ENCODE measurements at regions of chr12 and their contacts with region 1.

Region 1: DNA sequence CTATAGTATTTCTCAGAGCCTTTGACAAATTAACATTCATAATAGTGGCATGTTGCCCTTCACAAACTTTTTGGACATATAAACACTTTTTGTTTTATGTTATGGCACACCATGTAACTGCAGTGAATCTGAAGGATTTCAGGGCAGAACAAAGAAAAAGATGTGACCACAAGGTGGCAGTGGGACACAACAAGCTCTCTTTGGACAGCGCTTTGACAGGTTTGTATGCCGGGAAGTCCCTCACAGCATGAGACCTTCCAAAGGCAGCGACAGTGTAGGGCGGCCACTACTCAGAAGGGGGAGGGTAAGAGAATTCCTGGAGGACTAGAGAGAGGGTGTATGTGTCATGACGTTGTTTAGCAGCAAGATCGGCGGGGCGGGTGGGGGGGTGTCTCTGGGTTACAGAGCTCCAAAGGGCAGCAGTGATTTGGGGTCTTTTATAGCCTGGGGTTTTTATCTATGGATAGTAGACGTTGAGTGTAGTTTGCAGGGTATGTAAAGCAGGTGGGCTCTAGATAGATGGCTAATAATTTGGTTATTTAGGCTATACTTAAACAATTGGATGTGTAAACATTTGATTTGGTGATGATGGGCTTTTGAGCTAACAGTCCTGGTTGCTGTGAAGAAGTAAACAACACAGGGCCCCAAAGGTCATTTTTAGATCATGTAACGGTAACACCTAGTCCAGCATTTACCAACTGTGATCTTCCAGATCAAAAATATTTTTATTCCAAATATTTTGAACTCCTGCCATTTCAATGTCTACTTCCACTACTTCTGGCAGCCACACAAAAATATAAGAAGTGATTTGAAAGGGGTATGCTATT is 22.9 kb downstream of the ETFBKMT start:
- DNase-seq: peak; percentile 89
- ATAC-seq: peak; percentile 71
- H3K4me3 ChIP-seq: no peak overlapping the region
- H3K4me3 Mint-ChIP-seq: peak overlapping the region; percentile 69
- H3K27ac ChIP-seq: peak overlapping the region; percentile 50 to 73
- H3K27ac Mint-ChIP-seq: peak overlapping the region; percentile 93
- H3K4me1 ChIP-seq: peaks cover 19 to 30% of the 10 kb centered on the region in 2 donors
- H3K4me1 Mint-ChIP-seq: peaks cover 31% of the 10 kb centered on the region
- H3K27me3 ChIP-seq: no peaks in the 10 kb centered on the region
- H3K27me3 Mint-ChIP-seq: no peaks in the 10 kb centered on the region
- CTCF ChIP-seq: peak; percentile 88

Region 2: DNA sequence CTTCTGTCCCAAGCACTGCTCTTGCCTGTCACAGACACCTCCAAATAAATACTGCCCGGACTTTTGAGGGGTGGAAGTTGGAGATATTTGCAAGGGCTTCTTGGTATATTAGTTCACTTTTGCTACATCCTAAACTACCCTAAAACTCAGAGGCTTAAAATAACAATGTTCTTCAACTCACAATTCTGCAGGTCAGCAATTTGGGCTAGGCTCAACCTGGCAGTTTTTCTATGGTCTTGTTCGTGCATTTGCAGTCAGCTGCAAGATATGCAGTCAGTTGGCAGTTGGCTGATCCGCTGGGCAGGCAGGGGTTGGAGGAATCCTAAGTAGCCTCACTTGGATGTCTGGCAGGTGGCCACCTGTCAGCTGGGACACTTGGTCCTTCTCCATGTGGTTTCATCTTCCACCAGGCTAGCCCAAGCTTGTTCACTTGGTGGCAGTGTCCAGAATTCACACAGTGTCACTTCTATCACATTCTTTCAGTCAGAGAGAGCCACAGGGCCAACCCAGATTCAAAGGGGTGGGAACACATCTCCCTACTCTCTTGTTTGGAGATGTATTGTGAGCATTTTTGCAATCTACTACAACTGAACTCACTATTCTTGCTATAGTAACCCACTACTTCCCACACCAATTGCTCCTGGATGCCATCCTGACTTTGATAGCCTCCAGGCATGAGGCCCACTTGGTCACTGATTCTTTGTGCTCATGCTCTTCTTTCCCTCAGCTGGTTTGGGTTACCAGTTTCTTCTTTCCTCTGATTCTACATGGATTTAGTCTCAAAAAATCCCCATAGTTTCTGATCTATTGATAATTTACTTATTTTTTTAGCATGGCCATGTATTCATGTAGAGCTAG is 899.8 kb before region 1 on chr12:
- CTCF ChIA-PET with region 1: no interaction called
- POLR2A ChIA-PET with region 1: no interaction called
- intact Hi-C with region 1: no loop called
- DNase-seq: no peak
- ATAC-seq: no peak
- H3K4me3 ChIP-seq: no peak overlapping the region
- H3K4me3 Mint-ChIP-seq: no peak overlapping the region
- H3K27ac ChIP-seq: no peak overlapping the region
- H3K27ac Mint-ChIP-seq: no peak overlapping the region
- H3K4me1 ChIP-seq: no peaks in the 10 kb centered on the region
- H3K4me1 Mint-ChIP-seq: no peaks in the 10 kb centered on the region
- H3K27me3 ChIP-seq: peaks cover 0 to 4% (median 0%) of the 10 kb centered on the region in 4 experiments
- H3K27me3 Mint-ChIP-seq: peaks cover 46% of the 10 kb centered on the region
- CTCF ChIP-seq: no peak

Region 3: DNA sequence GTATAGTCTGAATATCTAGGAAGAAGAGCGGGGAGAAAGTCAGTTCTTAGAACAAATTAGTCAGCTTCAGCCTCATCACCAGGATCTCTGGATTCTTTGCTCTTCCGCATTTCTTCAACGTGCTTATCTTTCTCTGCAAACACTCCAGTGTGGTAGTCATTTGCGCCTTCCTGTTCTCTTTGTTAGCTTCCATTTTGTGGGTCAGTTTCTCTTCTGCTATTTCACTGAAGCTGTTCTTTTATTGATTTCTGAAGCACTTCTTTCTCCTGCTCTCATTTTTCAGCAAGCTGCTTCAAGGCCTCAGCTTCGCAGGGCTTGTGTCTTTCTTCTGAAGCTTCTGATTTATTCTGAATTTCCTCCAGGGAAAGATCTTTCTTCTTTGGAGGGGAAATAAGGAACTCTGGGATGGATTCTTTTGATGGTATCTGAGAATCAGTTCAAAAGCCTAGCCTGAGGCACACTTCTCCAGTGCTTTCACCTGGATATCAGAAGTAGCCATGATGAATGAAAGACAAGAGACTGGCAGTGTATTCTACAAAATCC is 33.0 kb after region 1 on chr12:
- CTCF ChIA-PET with region 1: interaction called, 7 read pairs
- POLR2A ChIA-PET with region 1: interaction called, 17 read pairs
- intact Hi-C with region 1: loop called (anchors 2 kb)
- DNase-seq: peak; percentile 83
- ATAC-seq: peak; percentile 96
- H3K4me3 ChIP-seq: peak overlapping the region; percentile 32 to 60 (median 53)
- H3K4me3 Mint-ChIP-seq: peak overlapping the region; percentile 51
- H3K27ac ChIP-seq: peak overlapping the region; percentile 88 to 90
- H3K27ac Mint-ChIP-seq: peak overlapping the region; percentile 87
- H3K4me1 ChIP-seq: peaks cover 32 to 37% of the 10 kb centered on the region in 2 donors
- H3K4me1 Mint-ChIP-seq: peaks cover 54% of the 10 kb centered on the region
- H3K27me3 ChIP-seq: no peaks in the 10 kb centered on the region
- H3K27me3 Mint-ChIP-seq: no peaks in the 10 kb centered on the region
- CTCF ChIP-seq: no peak

Region 4: GRCh38 chr12:31749024-31749704 is 66.8 kb after region 1 on chr12:
- CTCF ChIA-PET with region 1: interaction called, 9 read pairs
- POLR2A ChIA-PET with region 1: interaction called, 3 read pairs
- intact Hi-C with region 1: loop called (anchors 2 kb)
- DNase-seq: peak; percentile 67
- ATAC-seq: peak; percentile 70
- H3K4me3 ChIP-seq: peak overlapping the region in 2 of 5 experiments; percentile 1 to 26
- H3K4me3 Mint-ChIP-seq: peak overlapping the region; percentile 79
- H3K27ac ChIP-seq: peak overlapping the region; percentile 50 to 76
- H3K27ac Mint-ChIP-seq: peak overlapping the region; percentile 87
- H3K4me1 ChIP-seq: peaks cover 73 to 76% of the 10 kb centered on the region in 2 donors
- H3K4me1 Mint-ChIP-seq: peaks cover 72% of the 10 kb centered on the region
- H3K27me3 ChIP-seq: no peaks in the 10 kb centered on the region
- H3K27me3 Mint-ChIP-seq: no peaks in the 10 kb centered on the region
- CTCF ChIP-seq: no peak

Region 5: GRCh38 chr12:31896514-31897039 is 214.2 kb after region 1 on chr12:
- CTCF ChIA-PET with region 1: interaction called, 4 read pairs
- POLR2A ChIA-PET with region 1: interaction called, 3 read pairs
- intact Hi-C with region 1: loop called (anchors 1 kb)
- DNase-seq: peak; percentile 96
- ATAC-seq: peak; percentile 91
- H3K4me3 ChIP-seq: peak overlapping the region in 2 of 5 experiments; percentile 11 to 60
- H3K4me3 Mint-ChIP-seq: peak overlapping the region; percentile 72
- H3K27ac ChIP-seq: peak overlapping the region; percentile 89 to 96
- H3K27ac Mint-ChIP-seq: peak overlapping the region; percentile 91
- H3K4me1 ChIP-seq: peaks cover 42 to 55% of the 10 kb centered on the region in 2 donors
- H3K4me1 Mint-ChIP-seq: peaks cover 52% of the 10 kb centered on the region
- H3K27me3 ChIP-seq: no peaks in the 10 kb centered on the region
- H3K27me3 Mint-ChIP-seq: no peaks in the 10 kb centered on the region
- CTCF ChIP-seq: no peak

Region 6: DNA sequence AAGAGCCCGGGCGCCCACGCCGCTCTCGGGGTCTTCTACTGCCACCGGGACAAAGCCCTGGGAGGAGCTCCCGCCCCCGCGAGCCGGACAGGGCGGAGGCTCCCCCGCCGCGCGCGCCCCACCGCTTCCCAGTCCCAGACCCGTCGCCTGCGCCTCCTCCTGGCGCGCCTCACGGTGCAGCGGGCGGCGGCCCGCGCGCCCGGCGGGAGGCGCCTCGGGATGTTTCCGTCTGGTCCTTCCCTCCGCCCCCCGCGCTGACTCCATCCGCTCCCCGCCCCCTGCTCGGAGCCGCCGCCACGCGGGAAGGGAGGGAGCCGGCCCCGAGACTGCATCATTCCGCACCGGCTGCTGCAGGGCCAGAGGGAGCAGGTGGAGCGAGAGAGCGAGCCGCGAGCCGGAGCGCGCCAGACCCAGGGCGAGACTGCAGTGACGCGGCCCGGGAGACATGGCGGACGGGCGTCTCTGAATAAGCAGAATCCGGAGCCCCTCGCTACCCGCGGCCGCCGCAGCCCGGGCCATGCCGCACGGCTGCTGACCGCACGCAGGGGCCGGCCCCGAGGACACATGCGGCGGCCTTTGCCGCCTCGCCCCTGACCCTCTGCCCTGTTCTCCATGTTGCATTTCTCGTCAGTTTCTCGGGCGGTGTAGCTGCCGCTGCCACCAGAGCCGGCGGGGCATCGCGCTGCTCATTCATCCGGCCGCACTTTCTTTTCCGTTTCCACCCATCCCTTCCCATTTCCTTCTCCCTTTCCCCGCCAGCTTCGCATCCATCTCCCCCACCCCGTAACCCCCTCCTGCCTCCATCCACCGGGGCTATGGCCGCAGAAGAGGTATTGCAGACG is 424.4 kb after region 1 on chr12 and contains the start of gene BICD1:
- CTCF ChIA-PET with region 1: interaction called, 5 read pairs
- POLR2A ChIA-PET with region 1: no interaction called
- intact Hi-C with region 1: loop called (anchors 5 kb)
- DNase-seq: peak; percentile 80
- ATAC-seq: peak; percentile 82
- H3K4me3 ChIP-seq: peak within 1 kb of the TSS; percentile 43 to 95 (median 80)
- H3K4me3 Mint-ChIP-seq: peak within 1 kb of the TSS; percentile 93
- H3K27ac ChIP-seq: peak within 1 kb of the TSS; percentile 15 to 86
- H3K27ac Mint-ChIP-seq: peak within 1 kb of the TSS; percentile 97
- H3K4me1 ChIP-seq: peaks cover 19 to 20% of the 10 kb centered on the region in 2 donors
- H3K4me1 Mint-ChIP-seq: peaks cover 30% of the 10 kb centered on the region
- H3K27me3 ChIP-seq: no peaks in the 10 kb centered on the region
- H3K27me3 Mint-ChIP-seq: no peaks in the 10 kb centered on the region
- CTCF ChIP-seq: peak; percentile 23
- total RNA-seq, gene BICD1: 93.1 and 93.5 TPM in 2 replicates

Region 7: GRCh38 chr12:32312049-32312670 is 629.8 kb after region 1 on chr12:
- CTCF ChIA-PET with region 1: interaction called, 19 read pairs
- POLR2A ChIA-PET with region 1: no interaction called
- intact Hi-C with region 1: loop called (anchors 1 kb)
- DNase-seq: peak; percentile 67
- ATAC-seq: peak; percentile 58
- H3K4me3 ChIP-seq: no peak overlapping the region
- H3K4me3 Mint-ChIP-seq: no peak overlapping the region
- H3K27ac ChIP-seq: no peak overlapping the region
- H3K27ac Mint-ChIP-seq: peak overlapping the region; percentile 86
- H3K4me1 ChIP-seq: peaks cover 0 to 6% of the 10 kb centered on the region in 2 donors
- H3K4me1 Mint-ChIP-seq: peaks cover 8% of the 10 kb centered on the region
- H3K27me3 ChIP-seq: no peaks in the 10 kb centered on the region
- H3K27me3 Mint-ChIP-seq: no peaks in the 10 kb centered on the region
- CTCF ChIP-seq: peak; percentile 76